ENCODE measurements at regions of chr1 and their contacts with region 1.

Region 1: GRCh38 chr1:39575191-39576015 is 1.2 kb downstream of the PABPC4 start:
- DNase-seq: peak; percentile 16 to 78 (median 57)
- ATAC-seq: peak; percentile 65
- H3K4me3 ChIP-seq: peak overlapping the region; percentile 64 to 75
- H3K4me3 Mint-ChIP-seq: peak overlapping the region; percentile 93
- H3K27ac ChIP-seq: peak overlapping the region; percentile 68 to 72
- H3K27ac Mint-ChIP-seq: peak overlapping the region; percentile 92
- H3K4me1 ChIP-seq: peaks cover 41% of the 10 kb centered on the region
- H3K4me1 Mint-ChIP-seq: peaks cover 44% of the 10 kb centered on the region
- H3K27me3 ChIP-seq: no peaks in the 10 kb centered on the region
- H3K27me3 Mint-ChIP-seq: no peaks in the 10 kb centered on the region
- CTCF ChIP-seq: no peak

Region 2: DNA sequence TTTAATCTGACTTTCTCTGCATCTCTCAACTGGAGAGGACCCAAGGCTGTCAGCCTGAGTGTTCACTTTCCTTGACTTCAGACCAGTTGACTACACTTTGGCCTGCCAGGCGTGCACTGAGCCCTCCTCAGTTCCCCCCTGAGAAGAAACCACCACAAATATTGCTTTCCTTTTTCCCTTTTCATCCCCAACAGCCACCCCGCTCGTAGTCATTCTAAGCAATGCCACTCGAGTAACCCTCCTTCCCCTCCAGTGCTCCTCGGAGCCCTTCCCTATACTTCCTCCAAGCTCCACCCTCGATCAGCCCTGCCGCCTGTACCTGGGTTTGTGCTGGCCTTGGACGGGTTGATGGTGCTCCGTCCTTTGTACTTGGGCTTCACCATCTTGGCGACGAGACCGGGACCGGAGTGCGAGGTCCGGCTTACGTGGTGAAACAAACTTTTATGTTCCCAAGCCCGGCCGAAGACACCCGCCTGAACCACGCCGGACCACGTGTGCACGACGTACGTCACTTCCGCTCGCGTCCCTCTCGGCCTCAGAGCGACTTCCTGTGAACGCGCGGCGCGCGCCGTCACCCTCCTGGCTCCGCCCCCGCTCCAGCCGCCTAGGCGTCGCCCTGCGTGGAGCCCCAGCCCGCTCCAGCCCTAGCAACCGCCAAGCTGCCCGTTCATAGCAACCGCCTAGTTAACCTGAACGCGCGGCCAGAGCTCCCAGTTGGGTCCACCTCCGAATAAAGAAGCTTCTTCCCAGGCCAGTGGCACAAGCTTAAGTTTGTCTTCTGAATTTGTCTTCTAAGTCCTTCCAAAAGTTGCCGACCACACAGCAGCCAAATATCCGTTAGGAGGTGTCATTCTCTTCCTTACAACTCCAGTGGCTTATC is 1979.7 kb before region 1 on chr1 and contains the start of gene GNL2:
- CTCF ChIA-PET with region 1: no interaction called
- POLR2A ChIA-PET with region 1: no interaction called
- intact Hi-C with region 1: loop called (anchors 10 kb)
- DNase-seq: peak; percentile 92 to 99 (median 96)
- ATAC-seq: peak; percentile 95
- H3K4me3 ChIP-seq: peak within 1 kb of the TSS; percentile 67 to 88
- H3K4me3 Mint-ChIP-seq: peak within 1 kb of the TSS; percentile 100
- H3K27ac ChIP-seq: peak within 1 kb of the TSS; percentile 68 to 93
- H3K27ac Mint-ChIP-seq: peak within 1 kb of the TSS; percentile 99
- H3K4me1 ChIP-seq: peaks cover 23% of the 10 kb centered on the region
- H3K4me1 Mint-ChIP-seq: peaks cover 36% of the 10 kb centered on the region
- H3K27me3 ChIP-seq: no peaks in the 10 kb centered on the region
- H3K27me3 Mint-ChIP-seq: no peaks in the 10 kb centered on the region
- CTCF ChIP-seq: no peak
- total RNA-seq, gene GNL2: 54.6 to 55.2 TPM

Region 3: GRCh38 chr1:38873027-38873969 is 702.1 kb before region 1 on chr1 and contains the start of gene MYCBP:
- CTCF ChIA-PET with region 1: no interaction called
- POLR2A ChIA-PET with region 1: no interaction called
- intact Hi-C with region 1: loop called in 1 of 2 experiments (anchors 10 kb)
- DNase-seq: peak; percentile 94 to 98 (median 97)
- ATAC-seq: peak; percentile 98
- H3K4me3 ChIP-seq: peak within 1 kb of the TSS; percentile 56 to 92
- H3K4me3 Mint-ChIP-seq: peak within 1 kb of the TSS; percentile 93
- H3K27ac ChIP-seq: peak within 1 kb of the TSS; percentile 67 to 71
- H3K27ac Mint-ChIP-seq: peak within 1 kb of the TSS; percentile 84
- H3K4me1 ChIP-seq: peaks cover 16% of the 10 kb centered on the region
- H3K4me1 Mint-ChIP-seq: peaks cover 31% of the 10 kb centered on the region
- H3K27me3 ChIP-seq: no peaks in the 10 kb centered on the region
- H3K27me3 Mint-ChIP-seq: no peaks in the 10 kb centered on the region
- CTCF ChIP-seq: no peak
- total RNA-seq, gene MYCBP: 2.0 to 3.2 TPM

Region 4: DNA sequence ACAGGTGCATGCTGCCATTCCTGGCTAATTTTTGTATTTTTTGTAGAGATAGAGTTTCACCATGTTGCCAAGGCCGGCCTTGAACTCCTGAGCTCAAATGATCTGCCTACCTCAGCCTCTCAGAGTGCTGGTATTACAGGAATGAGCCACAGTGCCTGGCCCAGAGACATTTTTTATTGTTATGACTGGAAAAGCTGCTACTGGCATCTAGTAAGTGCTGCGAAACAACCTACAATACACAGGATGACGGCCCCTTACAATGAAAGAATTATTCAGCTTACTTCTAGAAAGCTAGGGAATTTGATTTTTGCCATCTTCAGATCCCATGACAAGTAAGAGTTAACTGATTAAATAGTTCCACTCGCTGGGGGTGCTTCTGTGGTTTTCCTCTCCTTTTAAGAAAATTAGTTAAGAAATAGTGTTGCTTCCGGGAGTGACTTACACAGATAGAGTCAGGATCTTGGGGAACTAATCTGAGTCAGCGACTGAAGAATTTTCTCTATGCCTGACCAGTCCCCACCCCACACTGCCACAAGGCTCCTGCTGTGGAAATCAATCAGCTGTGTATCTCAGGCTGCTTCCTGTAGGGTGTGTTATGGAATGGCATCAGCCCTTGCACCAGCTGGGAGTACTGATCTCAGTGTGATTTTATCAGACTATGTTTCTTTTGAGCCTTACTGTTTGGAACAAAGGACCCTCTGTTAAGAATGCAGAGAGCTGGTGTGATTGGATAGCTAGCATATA is 177.0 kb before region 1 on chr1:
- CTCF ChIA-PET with region 1: no interaction called
- POLR2A ChIA-PET with region 1: no interaction called
- intact Hi-C with region 1: no loop called
- DNase-seq: peak in 3 of 9 experiments; percentile 14 to 39 (median 22)
- ATAC-seq: peak; percentile 38
- H3K4me3 ChIP-seq: no peak overlapping the region
- H3K4me3 Mint-ChIP-seq: peak overlapping the region; percentile 9
- H3K27ac ChIP-seq: no peak overlapping the region
- H3K27ac Mint-ChIP-seq: peak overlapping the region; percentile 56
- H3K4me1 ChIP-seq: peaks cover 28% of the 10 kb centered on the region
- H3K4me1 Mint-ChIP-seq: peaks cover 55% of the 10 kb centered on the region
- H3K27me3 ChIP-seq: no peaks in the 10 kb centered on the region
- H3K27me3 Mint-ChIP-seq: no peaks in the 10 kb centered on the region
- CTCF ChIP-seq: no peak

Region 5: DNA sequence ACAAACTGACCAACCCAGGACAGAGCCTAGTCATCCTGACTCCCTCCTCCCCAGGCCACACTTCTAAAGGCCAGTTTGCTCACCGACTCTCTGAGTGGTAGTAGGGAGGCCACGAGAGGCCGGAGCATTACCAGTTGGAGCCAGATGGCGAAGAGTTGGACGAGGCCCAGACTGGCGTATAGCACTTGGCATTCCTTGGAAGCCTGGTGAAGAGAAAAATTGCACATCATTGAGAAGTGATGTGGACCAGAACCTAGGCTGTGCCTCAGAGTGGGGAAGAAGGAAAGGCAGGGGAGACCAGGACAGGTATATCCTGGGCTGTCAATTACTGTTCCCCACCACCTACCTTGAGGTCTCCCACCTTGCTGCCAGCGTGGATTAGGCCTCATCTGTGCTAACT is 11.1 kb before region 1 on chr1:
- CTCF ChIA-PET with region 1: interaction called, 6 read pairs
- POLR2A ChIA-PET with region 1: interaction called, 7 read pairs
- intact Hi-C with region 1: loop called (anchors 1 kb)
- DNase-seq: no peak
- ATAC-seq: no peak
- H3K4me3 ChIP-seq: no peak overlapping the region
- H3K4me3 Mint-ChIP-seq: no peak overlapping the region
- H3K27ac ChIP-seq: no peak overlapping the region
- H3K27ac Mint-ChIP-seq: no peak overlapping the region
- H3K4me1 ChIP-seq: peaks cover 6% of the 10 kb centered on the region
- H3K4me1 Mint-ChIP-seq: peaks cover 9% of the 10 kb centered on the region
- H3K27me3 ChIP-seq: no peaks in the 10 kb centered on the region
- H3K27me3 Mint-ChIP-seq: no peaks in the 10 kb centered on the region
- CTCF ChIP-seq: no peak

Region 6: GRCh38 chr1:39691262-39692151 is 116.1 kb after region 1 on chr1 and contains the start of gene HPCAL4:
- CTCF ChIA-PET with region 1: no interaction called
- POLR2A ChIA-PET with region 1: interaction called, 3 read pairs
- intact Hi-C with region 1: loop called in 1 of 2 experiments (anchors 1 kb)
- DNase-seq: peak; percentile 77 to 94 (median 89)
- ATAC-seq: peak; percentile 85
- H3K4me3 ChIP-seq: peak within 1 kb of the TSS; percentile 53 to 82
- H3K4me3 Mint-ChIP-seq: peak within 1 kb of the TSS; percentile 86
- H3K27ac ChIP-seq: peak within 1 kb of the TSS; percentile 40 to 86
- H3K27ac Mint-ChIP-seq: peak within 1 kb of the TSS; percentile 82
- H3K4me1 ChIP-seq: peaks cover 28% of the 10 kb centered on the region
- H3K4me1 Mint-ChIP-seq: peaks cover 34% of the 10 kb centered on the region
- H3K27me3 ChIP-seq: peaks cover 0 to 19% of the 10 kb centered on the region in 2 experiments
- H3K27me3 Mint-ChIP-seq: peaks cover 15% of the 10 kb centered on the region
- CTCF ChIP-seq: no peak
- total RNA-seq, gene HPCAL4: 12.1 to 12.8 TPM

Region 7: DNA sequence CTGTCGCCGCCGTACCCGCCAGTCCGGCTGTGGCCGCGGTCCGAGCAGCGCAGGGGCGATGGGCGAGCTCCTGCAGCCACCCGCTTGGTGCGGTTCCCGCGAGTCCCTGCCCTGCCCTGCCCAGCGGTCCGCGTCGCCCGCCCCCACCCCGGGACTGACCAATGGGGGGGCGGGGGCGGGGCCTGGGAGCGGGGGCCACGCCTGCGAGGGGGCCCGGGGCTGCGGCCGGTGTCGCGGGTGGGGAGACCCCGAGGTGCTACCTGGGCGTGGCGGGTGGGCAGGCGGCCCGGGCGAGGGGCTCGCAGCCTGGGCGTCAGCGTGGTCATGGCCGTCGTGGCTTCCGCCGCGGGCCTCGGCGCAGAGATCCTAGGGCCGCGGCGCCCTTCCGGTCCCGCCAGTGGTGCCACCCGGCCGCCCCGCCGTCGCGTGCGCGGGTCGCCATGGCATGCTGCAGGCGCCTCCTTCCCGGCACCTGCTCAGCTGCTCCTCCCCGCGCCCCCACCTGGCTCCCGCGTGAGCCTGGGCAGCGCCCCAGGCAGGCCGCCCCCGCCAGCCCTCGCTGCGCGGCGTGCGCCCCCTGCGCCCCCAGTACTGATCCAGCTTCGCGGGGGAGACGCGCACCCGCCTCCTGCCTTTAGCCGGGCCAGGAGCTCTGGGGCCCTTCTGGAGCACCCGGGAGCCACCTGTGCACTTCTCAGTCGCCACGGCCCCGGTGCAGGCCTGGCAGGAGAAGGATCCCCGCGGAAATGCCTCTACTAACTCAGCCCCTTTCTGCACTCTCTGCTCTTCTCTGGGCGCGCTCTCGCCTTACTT is 213.6 kb after region 1 on chr1 and contains the start of gene BMP8B:
- CTCF ChIA-PET with region 1: no interaction called
- POLR2A ChIA-PET with region 1: no interaction called
- intact Hi-C with region 1: no loop called
- DNase-seq: peak in 8 of 9 experiments; percentile 19 to 75 (median 44)
- ATAC-seq: peak; percentile 73
- H3K4me3 ChIP-seq: peak within 1 kb of the TSS; percentile 45 to 47
- H3K4me3 Mint-ChIP-seq: peak within 1 kb of the TSS; percentile 79
- H3K27ac ChIP-seq: no peak within 1 kb of the TSS
- H3K27ac Mint-ChIP-seq: no peak within 1 kb of the TSS
- H3K4me1 ChIP-seq: peaks cover 7% of the 10 kb centered on the region
- H3K4me1 Mint-ChIP-seq: peaks cover 11% of the 10 kb centered on the region
- H3K27me3 ChIP-seq: no peaks in the 10 kb centered on the region
- H3K27me3 Mint-ChIP-seq: peaks cover 26% of the 10 kb centered on the region
- CTCF ChIP-seq: no peak
- total RNA-seq, gene BMP8B: 0.19 to 0.24 TPM

Region 8: GRCh38 chr1:39886757-39887231 is 311.4 kb after region 1 on chr1:
- CTCF ChIA-PET with region 1: no interaction called
- POLR2A ChIA-PET with region 1: no interaction called
- intact Hi-C with region 1: loop called in 1 of 2 experiments (anchors 10 kb)
- DNase-seq: no peak
- ATAC-seq: no peak
- H3K4me3 ChIP-seq: no peak overlapping the region
- H3K4me3 Mint-ChIP-seq: no peak overlapping the region
- H3K27ac ChIP-seq: no peak overlapping the region
- H3K27ac Mint-ChIP-seq: no peak overlapping the region
- H3K4me1 ChIP-seq: peaks cover 11% of the 10 kb centered on the region
- H3K4me1 Mint-ChIP-seq: peaks cover 15% of the 10 kb centered on the region
- H3K27me3 ChIP-seq: peaks cover 0 to 4% of the 10 kb centered on the region in 2 experiments
- H3K27me3 Mint-ChIP-seq: peaks cover 5% of the 10 kb centered on the region
- CTCF ChIP-seq: no peak

Region 9: DNA sequence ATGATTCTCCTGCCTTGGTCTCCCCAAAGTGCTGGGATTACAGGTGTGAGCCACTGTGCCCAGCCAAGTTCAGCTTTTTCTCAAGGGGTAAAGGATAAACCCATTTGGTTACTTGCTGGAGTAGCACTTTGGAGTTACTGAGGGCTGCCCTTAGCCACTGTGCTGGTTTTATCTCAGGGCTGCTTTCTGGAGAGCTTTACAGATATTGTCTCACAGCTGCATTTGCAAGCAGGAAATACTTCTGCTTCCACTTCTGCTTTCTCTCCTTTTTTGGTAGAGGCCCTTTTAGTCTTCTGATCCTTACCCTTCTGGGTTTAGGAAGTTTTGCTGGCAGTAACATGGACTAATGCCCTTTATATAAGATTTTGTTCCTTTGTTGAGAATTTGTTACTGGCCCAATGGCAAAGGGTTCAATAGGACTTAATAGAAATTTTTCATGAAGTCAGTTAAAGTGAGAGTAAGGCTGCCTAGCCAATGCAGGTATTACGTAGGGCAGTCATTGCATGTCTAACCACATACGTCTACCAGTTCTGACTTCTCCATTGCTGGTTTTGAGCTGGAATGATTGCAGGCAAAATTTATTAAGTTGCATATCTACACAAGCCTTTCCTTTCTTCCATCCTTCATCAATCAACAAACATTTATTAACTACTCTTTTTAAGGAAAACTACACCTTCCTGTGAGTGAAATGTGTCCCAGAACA is 489.5 kb after region 1 on chr1:
- CTCF ChIA-PET with region 1: no interaction called
- POLR2A ChIA-PET with region 1: no interaction called
- intact Hi-C with region 1: loop called in 1 of 2 experiments (anchors 5 kb)
- DNase-seq: peak in 1 of 9 experiments; percentile 42
- ATAC-seq: peak; percentile 53
- H3K4me3 ChIP-seq: no peak overlapping the region
- H3K4me3 Mint-ChIP-seq: peak overlapping the region; percentile 26
- H3K27ac ChIP-seq: peak overlapping the region; percentile 11 to 71
- H3K27ac Mint-ChIP-seq: peak overlapping the region; percentile 87
- H3K4me1 ChIP-seq: peaks cover 52% of the 10 kb centered on the region
- H3K4me1 Mint-ChIP-seq: peaks cover 69% of the 10 kb centered on the region
- H3K27me3 ChIP-seq: no peaks in the 10 kb centered on the region
- H3K27me3 Mint-ChIP-seq: no peaks in the 10 kb centered on the region
- CTCF ChIP-seq: no peak

Measured in CD8-positive, alpha-beta T cell (primary cell).